Thyroid gland (tissue), 4 donors: ENCODE measurements at regions of chr14 and their contacts with region 1.

Region 1: GRCh38 chr14:21092273-21093011 is 6.0 kb downstream of the ZNF219 start:
- DNase-seq: peak; percentile 94 to 95
- H3K4me3 ChIP-seq: peak overlapping the region in 1 of 3 donors; percentile 11
- H3K27ac ChIP-seq: peak overlapping the region; percentile 83 to 98 (median 96)
- H3K4me1 ChIP-seq: peaks cover 35 to 56% of the 10 kb centered on the region in 2 donors
- H3K27me3 ChIP-seq: no peaks in the 10 kb centered on the region
- CTCF ChIP-seq: peak; percentile 99 to 100 (median 100)
- POLR2A ChIP-seq: peak in 1 of 2 donors; percentile 85

Region 2: DNA sequence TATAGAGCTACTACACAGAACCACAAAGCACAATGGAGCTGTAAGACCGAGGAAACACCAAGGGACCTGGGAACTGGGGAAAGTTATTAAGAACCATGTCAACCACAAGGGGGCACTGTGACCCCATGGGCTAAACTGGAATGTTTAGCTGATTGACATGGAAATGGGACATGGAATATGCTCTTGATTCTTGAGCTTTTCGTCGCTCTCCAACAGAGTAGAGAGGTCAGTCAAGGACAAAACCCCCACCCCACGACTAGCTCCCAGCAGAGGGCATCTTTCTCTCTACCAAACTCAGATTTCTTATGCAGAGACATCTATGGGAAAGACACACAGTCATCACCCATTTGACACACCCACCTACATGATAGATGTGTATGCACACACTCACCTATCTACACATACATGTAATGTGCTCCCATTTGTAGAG is 77.7 kb before region 1 on chr14:
- intact Hi-C with region 1: loop called (anchors 5 kb)
- DNase-seq: peak; percentile 84 to 91
- H3K4me3 ChIP-seq: no peak overlapping the region
- H3K27ac ChIP-seq: no peak overlapping the region
- H3K4me1 ChIP-seq: no peaks in the 10 kb centered on the region
- H3K27me3 ChIP-seq: no peaks in the 10 kb centered on the region
- CTCF ChIP-seq: peak; percentile 91 to 97 (median 95)
- POLR2A ChIP-seq: no peak

Region 3: GRCh38 chr14:21068521-21069387 is 23.7 kb before region 1 on chr14:
- intact Hi-C with region 1: loop called (anchors 2 kb)
- DNase-seq: peak; percentile 69 to 75
- H3K4me3 ChIP-seq: peak overlapping the region in 1 of 3 donors; percentile 60
- H3K27ac ChIP-seq: peak overlapping the region; percentile 26 to 90 (median 85)
- H3K4me1 ChIP-seq: peaks cover 32 to 40% of the 10 kb centered on the region in 2 donors
- H3K27me3 ChIP-seq: no peaks in the 10 kb centered on the region
- CTCF ChIP-seq: peak; percentile 30 to 85 (median 74)
- POLR2A ChIP-seq: no peak

Region 4: GRCh38 chr14:21123429-21123828 is 31.0 kb after region 1 on chr14:
- intact Hi-C with region 1: no loop called
- DNase-seq: no peak
- H3K4me3 ChIP-seq: no peak overlapping the region
- H3K27ac ChIP-seq: no peak overlapping the region
- H3K4me1 ChIP-seq: no peaks in the 10 kb centered on the region
- H3K27me3 ChIP-seq: no peaks in the 10 kb centered on the region
- CTCF ChIP-seq: no peak
- POLR2A ChIP-seq: no peak